PC-3 (cell line): ENCODE measurements at regions of chr3 and their contacts with region 1.

Region 1: GRCh38 chr3:169149349-169149890 is 514.1 kb downstream of the MECOM start:
- DNase-seq: peak; percentile 92
- ATAC-seq: peak; percentile 76
- H3K4me3 ChIP-seq: peak overlapping the region; percentile 73
- H3K27ac ChIP-seq: peak overlapping the region; percentile 12
- H3K4me1 ChIP-seq: peaks cover 33% of the 10 kb centered on the region
- H3K27me3 ChIP-seq: no peaks in the 10 kb centered on the region
- CTCF ChIP-seq: peak; percentile 87

Region 2: DNA sequence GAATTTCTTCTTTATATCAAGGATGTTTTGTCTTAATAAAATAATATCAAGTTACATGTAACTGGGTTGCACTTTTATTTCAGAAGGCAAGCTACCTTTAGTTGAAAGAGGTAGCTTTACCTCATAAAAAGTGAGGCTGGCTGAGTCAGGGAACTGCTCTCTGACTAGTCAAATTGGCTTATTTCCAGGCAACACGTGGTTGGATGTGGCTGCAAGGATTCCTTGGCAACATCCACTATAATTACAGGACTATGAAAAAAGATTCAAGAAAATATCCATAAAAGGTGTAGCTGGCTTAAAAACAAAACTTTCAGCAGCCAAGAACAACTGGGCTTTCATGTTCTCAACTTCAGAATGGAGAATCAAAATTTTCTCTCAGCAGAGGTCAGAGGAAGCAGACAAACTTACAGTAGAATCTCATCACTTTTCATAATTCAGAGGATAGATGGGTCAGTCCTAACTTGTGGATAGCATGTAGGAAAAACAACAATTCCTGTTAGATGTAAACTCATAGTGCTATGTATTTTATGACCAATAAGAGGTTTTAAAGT is 265.0 kb before region 1 on chr3:
- CTCF ChIA-PET with region 1: no interaction called
- POLR2A ChIA-PET with region 1: no interaction called
- intact Hi-C with region 1: loop called (anchors 5 kb)
- DNase-seq: peak; percentile 98
- ATAC-seq: peak; percentile 66
- H3K4me3 ChIP-seq: peak overlapping the region; percentile 51
- H3K27ac ChIP-seq: peak overlapping the region; percentile 97
- H3K4me1 ChIP-seq: peaks cover 54% of the 10 kb centered on the region
- H3K27me3 ChIP-seq: no peaks in the 10 kb centered on the region
- CTCF ChIP-seq: no peak

Region 3: DNA sequence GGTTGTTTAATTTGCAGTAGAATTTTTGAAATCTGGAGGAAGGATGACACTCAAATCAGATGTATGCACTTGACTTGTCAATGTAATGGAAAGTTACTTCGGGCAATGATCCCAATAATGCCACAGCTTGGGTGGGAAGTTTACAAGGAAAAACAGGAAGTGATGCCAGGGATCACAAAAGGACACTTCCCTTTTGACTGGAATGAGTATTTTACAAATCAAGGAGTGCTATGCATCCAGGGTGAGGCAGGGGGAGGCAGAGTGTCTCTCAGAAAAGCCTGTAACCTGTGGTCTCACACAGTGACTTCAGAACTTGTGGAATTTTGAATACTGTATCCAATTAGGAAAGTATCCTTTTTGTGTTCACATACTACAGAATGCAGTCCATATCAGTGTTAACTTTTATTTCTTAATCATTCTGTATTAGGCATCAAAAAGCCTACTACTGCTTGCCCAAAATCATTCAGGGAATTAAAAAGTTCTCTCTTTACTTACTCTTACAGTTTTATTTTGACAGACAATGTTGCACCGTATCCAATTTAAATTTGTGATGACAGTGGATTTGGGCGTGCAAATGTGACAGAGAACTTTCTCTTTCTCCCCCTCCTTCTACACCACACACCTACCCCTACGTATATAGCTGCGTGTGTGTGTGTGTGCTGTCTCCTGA is 69.0 kb after region 1 on chr3:
- CTCF ChIA-PET with region 1: interaction called, 12 read pairs
- POLR2A ChIA-PET with region 1: no interaction called
- intact Hi-C with region 1: loop called (anchors 1 kb)
- DNase-seq: peak; percentile 82
- ATAC-seq: peak; percentile 99
- H3K4me3 ChIP-seq: no peak overlapping the region
- H3K27ac ChIP-seq: no peak overlapping the region
- H3K4me1 ChIP-seq: peaks cover 5% of the 10 kb centered on the region; the same call in 1 of the 2 replicates
- H3K27me3 ChIP-seq: no peaks in the 10 kb centered on the region
- CTCF ChIP-seq: peak; percentile 86

Region 4: GRCh38 chr3:169362301-169362700 is 212.9 kb after region 1 on chr3:
- CTCF ChIA-PET with region 1: interaction called, 4 read pairs
- POLR2A ChIA-PET with region 1: no interaction called
- intact Hi-C with region 1: loop called (anchors 2 kb)
- DNase-seq: peak; percentile 48
- ATAC-seq: no peak
- H3K4me3 ChIP-seq: no peak overlapping the region
- H3K27ac ChIP-seq: no peak overlapping the region
- H3K4me1 ChIP-seq: no peaks in the 10 kb centered on the region
- H3K27me3 ChIP-seq: no peaks in the 10 kb centered on the region
- CTCF ChIP-seq: no peak

Region 5: GRCh38 chr3:169404520-169404890 is 255.1 kb after region 1 on chr3:
- CTCF ChIA-PET with region 1: no interaction called
- POLR2A ChIA-PET with region 1: no interaction called
- intact Hi-C with region 1: no loop called
- DNase-seq: no peak
- ATAC-seq: no peak
- H3K4me3 ChIP-seq: no peak overlapping the region
- H3K27ac ChIP-seq: no peak overlapping the region
- H3K4me1 ChIP-seq: no peaks in the 10 kb centered on the region
- H3K27me3 ChIP-seq: no peaks in the 10 kb centered on the region
- CTCF ChIP-seq: no peak

Region 6: GRCh38 chr3:169478566-169479313 is 329.3 kb after region 1 on chr3:
- CTCF ChIA-PET with region 1: interaction called, 10 read pairs
- POLR2A ChIA-PET with region 1: no interaction called
- intact Hi-C with region 1: no loop called
- DNase-seq: no peak
- ATAC-seq: no peak
- H3K4me3 ChIP-seq: no peak overlapping the region
- H3K27ac ChIP-seq: no peak overlapping the region
- H3K4me1 ChIP-seq: no peaks in the 10 kb centered on the region
- H3K27me3 ChIP-seq: no peaks in the 10 kb centered on the region
- CTCF ChIP-seq: no peak

Region 7: DNA sequence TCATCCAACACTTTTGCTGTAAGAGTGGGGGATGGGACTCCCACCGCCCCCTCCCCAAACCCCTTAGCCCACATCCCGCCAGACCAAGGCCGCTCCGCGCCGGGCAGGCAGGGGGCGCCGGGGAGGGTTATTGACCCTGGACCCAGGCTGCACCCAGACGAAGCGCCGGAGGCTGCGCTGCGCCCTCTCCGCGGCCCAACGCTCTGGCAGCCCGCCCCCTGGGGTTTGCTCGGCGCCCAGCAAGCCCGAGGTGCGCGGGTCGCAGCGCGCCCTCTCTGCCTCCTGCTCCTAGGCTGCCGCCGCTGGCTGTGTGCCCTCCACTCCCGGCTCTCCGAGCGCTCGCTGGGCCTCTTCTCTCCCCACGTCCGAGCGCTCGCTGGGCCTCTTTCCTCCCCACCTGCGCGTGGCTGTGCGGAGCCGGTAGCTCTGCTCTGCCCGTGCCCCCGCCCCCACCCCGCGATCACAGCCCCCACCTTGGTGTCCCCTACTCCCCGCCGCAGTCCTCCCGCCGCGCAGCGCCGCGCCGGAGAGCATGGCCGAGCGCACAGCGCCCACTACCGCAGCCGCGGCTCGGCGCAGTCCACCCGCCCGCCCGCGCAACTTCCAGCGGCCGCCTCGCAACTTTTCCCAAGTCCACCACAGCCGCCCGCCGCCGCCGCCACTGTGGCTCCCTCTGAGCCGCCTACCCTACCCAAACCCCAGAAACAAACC is 512.9 kb after region 1 on chr3:
- CTCF ChIA-PET with region 1: interaction called, 13 read pairs
- POLR2A ChIA-PET with region 1: interaction called, 11 read pairs
- intact Hi-C with region 1: no loop called
- DNase-seq: peak; percentile 73
- ATAC-seq: peak; percentile 72
- H3K4me3 ChIP-seq: peak overlapping the region; percentile 97
- H3K27ac ChIP-seq: peak overlapping the region; percentile 11
- H3K4me1 ChIP-seq: peaks cover 12% of the 10 kb centered on the region
- H3K27me3 ChIP-seq: no peaks in the 10 kb centered on the region
- CTCF ChIP-seq: peak; percentile 67